GM10248 (cell line): ENCODE measurements at regions of chr3 and their contacts with region 1.

Region 1: DNA sequence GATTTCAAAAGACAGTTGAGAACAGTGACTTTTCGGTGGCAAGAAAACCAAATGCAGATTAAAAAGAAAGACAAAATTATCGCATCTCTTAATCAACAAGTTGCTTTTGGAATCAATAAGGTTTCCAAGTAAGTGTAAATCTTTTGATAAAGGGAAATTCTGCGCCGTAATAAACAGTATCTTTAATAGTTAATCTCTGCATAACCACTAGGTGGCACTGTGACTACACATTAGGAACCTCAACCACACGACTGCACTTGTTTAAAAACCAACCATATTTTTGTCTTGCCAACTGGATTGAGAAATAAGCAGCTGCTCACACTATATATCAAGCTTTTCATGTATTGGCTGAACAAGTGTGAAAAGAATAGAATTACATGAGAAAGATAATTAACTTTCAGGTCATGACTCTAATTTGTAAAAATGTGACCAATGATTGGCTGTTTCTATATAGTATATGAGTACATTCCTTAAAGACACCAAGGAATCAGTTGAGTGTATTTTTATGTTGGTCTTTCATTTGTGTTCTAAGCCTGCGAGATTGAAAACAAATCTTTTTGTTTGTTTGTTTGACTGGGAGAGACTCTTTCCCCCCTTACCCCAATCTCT is 72.7 kb downstream of the DZIP3 start:
- DNase-seq: peak; percentile 52
- CTCF ChIP-seq: peak; percentile 69

Region 2: DNA sequence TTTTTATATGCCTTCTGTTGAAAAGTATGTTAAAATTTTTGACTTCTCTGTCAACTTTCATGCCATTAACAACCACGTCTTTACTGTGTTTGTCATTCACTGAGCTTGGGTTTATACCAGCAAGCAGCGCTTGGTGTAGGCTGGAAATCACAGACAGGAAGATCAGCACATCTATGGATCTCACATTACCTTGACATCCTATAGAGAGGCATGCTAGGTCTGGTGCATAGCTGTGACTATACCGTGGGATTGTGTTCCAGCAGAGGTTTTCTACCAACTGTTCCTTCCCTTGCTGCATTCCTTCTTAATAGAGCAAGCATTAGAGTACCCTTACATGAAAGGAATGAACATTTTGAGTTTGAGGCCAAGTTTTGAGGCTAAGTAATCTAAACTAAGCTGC is 19.7 kb before region 1 on chr3:
- CTCF ChIA-PET with region 1: interaction called, 10 read pairs
- POLR2A ChIA-PET with region 1: no interaction called
- DNase-seq: no peak
- CTCF ChIP-seq: no peak